ENCODE measurements at regions of chr2 and their contacts with region 1.

Region 1: DNA sequence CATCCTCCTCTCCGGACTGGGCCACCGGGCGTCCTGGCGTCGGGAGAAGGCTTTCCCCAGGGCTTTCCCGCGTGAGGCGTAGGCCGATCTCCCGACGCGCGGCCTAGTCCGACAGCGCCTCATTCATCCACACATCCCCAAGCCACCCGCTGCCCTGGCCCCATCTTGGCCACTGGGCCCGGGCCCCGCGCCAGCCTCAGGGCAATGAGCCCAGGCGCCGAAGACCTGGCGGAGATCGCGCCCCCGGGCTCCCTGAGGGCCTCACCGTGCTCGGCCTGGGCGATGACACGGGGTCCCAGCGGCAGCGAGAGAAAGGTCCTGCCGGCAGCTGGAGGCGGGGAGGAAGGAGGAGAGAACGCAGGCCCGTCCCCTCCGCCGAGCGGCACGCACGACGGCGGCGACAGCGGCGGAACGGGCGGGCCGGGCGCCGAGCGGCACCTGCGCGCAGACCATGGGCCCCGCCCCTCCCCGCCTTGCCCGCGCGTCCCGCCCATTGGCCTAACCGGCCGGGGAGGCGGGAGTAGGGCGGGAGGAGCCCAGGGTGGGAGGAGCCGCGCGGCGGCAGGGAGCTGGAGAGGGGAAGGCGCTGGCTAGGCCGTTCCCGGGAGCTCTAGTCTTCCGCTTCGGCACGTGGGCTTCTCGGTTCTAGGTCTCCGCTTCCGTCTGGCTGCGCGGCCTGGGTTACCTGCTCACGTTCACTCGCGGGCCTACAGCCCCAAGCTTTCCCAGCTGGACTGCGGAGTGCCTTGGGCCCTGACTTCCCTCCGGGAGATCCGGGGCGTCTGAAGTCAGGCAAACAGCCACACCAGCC is at the start of gene OLA1:
- DNase-seq: peak; percentile 94
- ATAC-seq: peak; percentile 97
- H3K4me3 ChIP-seq: peak within 1 kb of the TSS; percentile 47 to 91 (median 79)
- H3K4me3 Mint-ChIP-seq: peak within 1 kb of the TSS; percentile 91
- H3K27ac ChIP-seq: peak within 1 kb of the TSS; percentile 70 to 87
- H3K27ac Mint-ChIP-seq: peak within 1 kb of the TSS; percentile 85
- H3K4me1 ChIP-seq: peaks cover 12 to 17% of the 10 kb centered on the region in 2 donors
- H3K4me1 Mint-ChIP-seq: peaks cover 23% of the 10 kb centered on the region
- H3K27me3 ChIP-seq: peaks cover 0 to 4% (median 0%) of the 10 kb centered on the region in 4 experiments
- H3K27me3 Mint-ChIP-seq: peaks cover 8% of the 10 kb centered on the region
- CTCF ChIP-seq: no peak
- total RNA-seq, gene OLA1: 44.3 and 47.7 TPM in 2 replicates

Region 2: GRCh38 chr2:173354601-173355131 is 893.7 kb before region 1 on chr2 and contains the start of gene CDCA7:
- CTCF ChIA-PET with region 1: no interaction called
- POLR2A ChIA-PET with region 1: no interaction called
- intact Hi-C with region 1: loop called (anchors 1 kb)
- DNase-seq: peak; percentile 69
- ATAC-seq: peak; percentile 70
- H3K4me3 ChIP-seq: peak within 1 kb of the TSS; percentile 48 to 68 (median 64)
- H3K4me3 Mint-ChIP-seq: peak within 1 kb of the TSS; percentile 88
- H3K27ac ChIP-seq: no peak within 1 kb of the TSS
- H3K27ac Mint-ChIP-seq: peak within 1 kb of the TSS; percentile 64
- H3K4me1 ChIP-seq: peaks cover 14 to 20% of the 10 kb centered on the region in 2 donors
- H3K4me1 Mint-ChIP-seq: peaks cover 26% of the 10 kb centered on the region
- H3K27me3 ChIP-seq: peaks cover 0 to 40% (median 16%) of the 10 kb centered on the region in 4 experiments
- H3K27me3 Mint-ChIP-seq: peaks cover 27% of the 10 kb centered on the region
- CTCF ChIP-seq: no peak
- total RNA-seq, gene CDCA7: 2.6 and 3.2 TPM in 2 replicates

Region 3: DNA sequence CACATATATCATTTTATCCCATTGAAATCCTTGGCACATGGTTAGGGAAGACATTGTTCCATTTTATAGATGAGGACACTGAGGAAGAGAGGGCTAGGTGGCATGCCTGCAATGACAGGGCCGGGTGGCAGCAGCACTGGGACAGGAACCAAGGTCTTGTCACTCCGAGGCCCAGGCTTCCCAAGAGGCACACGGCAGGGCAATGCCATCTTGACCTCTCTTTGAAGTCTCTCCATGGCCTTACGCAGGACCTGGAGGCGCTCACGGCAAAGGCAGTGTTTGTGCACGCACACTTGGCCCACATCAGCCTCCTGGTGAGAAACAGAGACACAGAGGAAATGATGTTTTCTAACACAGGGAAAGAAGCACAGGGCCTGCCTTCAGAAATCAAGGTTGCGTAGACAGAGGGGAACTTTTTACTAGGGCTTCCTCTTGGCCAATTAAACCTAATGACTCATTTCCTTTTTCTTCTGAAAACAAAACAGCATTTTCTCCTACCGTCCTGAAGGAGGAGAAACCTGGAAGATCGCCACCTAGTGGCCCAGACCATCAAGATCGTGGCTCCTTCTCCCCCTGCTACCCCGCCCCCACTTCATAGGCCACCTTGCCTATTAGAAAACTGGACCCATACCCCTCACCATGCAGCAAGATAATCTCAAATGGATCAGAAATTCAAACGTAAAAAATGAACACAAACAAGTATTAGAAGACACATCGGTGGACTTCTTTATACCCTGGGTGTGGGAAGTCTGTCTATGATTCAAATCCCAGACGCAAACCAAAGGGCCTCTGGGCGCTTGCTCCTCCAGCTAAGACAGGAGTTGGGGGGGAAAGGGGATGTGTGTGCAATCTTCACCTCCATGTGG is 208.6 kb before region 1 on chr2:
- CTCF ChIA-PET with region 1: no interaction called
- POLR2A ChIA-PET with region 1: no interaction called
- intact Hi-C with region 1: loop called (anchors 1 kb)
- DNase-seq: peak; percentile 93
- ATAC-seq: peak; percentile 90
- H3K4me3 ChIP-seq: peak overlapping the region in 4 of 5 experiments; percentile 7 to 34 (median 19)
- H3K4me3 Mint-ChIP-seq: peak overlapping the region; percentile 72
- H3K27ac ChIP-seq: peak overlapping the region; percentile 87 to 94
- H3K27ac Mint-ChIP-seq: peak overlapping the region; percentile 96
- H3K4me1 ChIP-seq: peaks cover 11 to 23% of the 10 kb centered on the region in 2 donors
- H3K4me1 Mint-ChIP-seq: peaks cover 24% of the 10 kb centered on the region
- H3K27me3 ChIP-seq: peaks cover 0 to 5% (median 2%) of the 10 kb centered on the region in 4 experiments
- H3K27me3 Mint-ChIP-seq: no peaks in the 10 kb centered on the region
- CTCF ChIP-seq: peak; percentile 84

Region 4: DNA sequence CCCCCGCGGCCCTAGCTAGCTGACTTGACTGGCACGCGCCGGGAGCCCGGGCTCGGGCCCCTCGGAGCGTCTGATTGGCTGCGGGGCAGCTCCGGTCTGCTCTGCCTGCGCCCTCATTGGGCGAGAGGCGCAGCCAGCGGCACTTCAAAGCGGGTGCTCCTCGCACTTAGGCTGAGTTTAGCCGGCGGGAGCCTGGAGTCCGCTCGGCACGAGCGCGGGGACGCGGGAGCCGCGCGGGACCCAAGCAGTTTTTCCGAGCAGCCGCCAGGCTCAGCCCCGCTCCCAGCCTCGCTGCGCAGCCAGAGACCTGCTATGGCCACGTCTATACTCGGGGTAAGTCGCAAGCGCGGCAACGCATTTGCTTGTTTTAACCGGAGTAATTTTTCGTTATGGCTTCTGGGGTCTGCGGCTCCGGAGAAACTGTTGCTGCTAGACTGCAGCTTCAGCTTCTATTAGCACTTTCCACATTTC is 86.4 kb after region 1 on chr2 and contains the start of gene SP9:
- CTCF ChIA-PET with region 1: no interaction called
- POLR2A ChIA-PET with region 1: no interaction called
- intact Hi-C with region 1: loop called (anchors 2 kb)
- DNase-seq: no peak
- ATAC-seq: no peak
- H3K4me3 ChIP-seq: peak within 1 kb of the TSS in 3 of 5 experiments; percentile 33 to 43 (median 35)
- H3K4me3 Mint-ChIP-seq: peak within 1 kb of the TSS; percentile 71
- H3K27ac ChIP-seq: no peak within 1 kb of the TSS
- H3K27ac Mint-ChIP-seq: peak within 1 kb of the TSS; percentile 76
- H3K4me1 ChIP-seq: peaks cover 52 to 70% of the 10 kb centered on the region in 2 donors
- H3K4me1 Mint-ChIP-seq: peaks cover 26% of the 10 kb centered on the region
- H3K27me3 ChIP-seq: peaks cover 4 to 93% (median 81%) of the 10 kb centered on the region in 4 experiments
- H3K27me3 Mint-ChIP-seq: peaks cover 68% of the 10 kb centered on the region
- CTCF ChIP-seq: no peak
- total RNA-seq, gene SP9: not detected in 2 replicates

Region 5: DNA sequence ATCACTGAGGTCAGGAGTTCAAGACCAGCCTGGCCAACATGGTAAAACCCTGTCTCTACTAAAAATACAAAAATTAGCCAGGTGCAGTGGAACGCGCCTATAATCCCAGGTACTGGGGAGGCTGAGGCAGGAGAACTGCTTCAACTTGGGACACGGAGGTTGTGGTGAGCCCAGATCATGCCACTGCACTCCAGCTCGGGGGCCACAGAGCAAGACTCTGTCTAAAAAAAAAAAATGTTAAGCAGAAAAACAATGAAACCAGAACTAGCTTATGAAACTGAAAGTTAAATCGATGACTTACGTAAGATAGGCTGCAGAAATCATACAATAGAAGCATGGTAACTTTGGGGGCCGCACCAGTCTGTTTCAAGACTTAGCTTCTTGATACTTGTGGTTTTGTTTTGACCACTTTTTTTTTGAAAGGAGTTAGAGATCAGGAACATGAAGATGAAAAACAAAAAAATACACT is 244.6 kb after region 1 on chr2:
- CTCF ChIA-PET with region 1: no interaction called
- POLR2A ChIA-PET with region 1: no interaction called
- intact Hi-C with region 1: loop called (anchors 10 kb)
- DNase-seq: peak; percentile 89
- ATAC-seq: peak; percentile 95
- H3K4me3 ChIP-seq: peak overlapping the region in 3 of 5 experiments; percentile 34 to 50 (median 37)
- H3K4me3 Mint-ChIP-seq: peak overlapping the region; percentile 84
- H3K27ac ChIP-seq: peak overlapping the region; percentile 82 to 94
- H3K27ac Mint-ChIP-seq: peak overlapping the region; percentile 94
- H3K4me1 ChIP-seq: peaks cover 30 to 32% of the 10 kb centered on the region in 2 donors
- H3K4me1 Mint-ChIP-seq: peaks cover 51% of the 10 kb centered on the region
- H3K27me3 ChIP-seq: no peaks in the 10 kb centered on the region
- H3K27me3 Mint-ChIP-seq: no peaks in the 10 kb centered on the region
- CTCF ChIP-seq: no peak

Region 6: GRCh38 chr2:174681099-174682006 is 433.0 kb after region 1 on chr2:
- CTCF ChIA-PET with region 1: no interaction called
- POLR2A ChIA-PET with region 1: no interaction called
- intact Hi-C with region 1: no loop called
- DNase-seq: no peak
- ATAC-seq: no peak
- H3K4me3 ChIP-seq: peak overlapping the region; percentile 67 to 87 (median 72)
- H3K4me3 Mint-ChIP-seq: peak overlapping the region; percentile 86
- H3K27ac ChIP-seq: peak overlapping the region in 1 of 2 donors; percentile 67
- H3K27ac Mint-ChIP-seq: no peak overlapping the region
- H3K4me1 ChIP-seq: peaks cover 8 to 12% of the 10 kb centered on the region in 2 donors
- H3K4me1 Mint-ChIP-seq: peaks cover 20% of the 10 kb centered on the region
- H3K27me3 ChIP-seq: no peaks in the 10 kb centered on the region
- H3K27me3 Mint-ChIP-seq: no peaks in the 10 kb centered on the region
- CTCF ChIP-seq: no peak

Region 7: GRCh38 chr2:174827371-174828369 is 579.3 kb after region 1 on chr2:
- CTCF ChIA-PET with region 1: no interaction called
- POLR2A ChIA-PET with region 1: no interaction called
- intact Hi-C with region 1: no loop called
- DNase-seq: no peak
- ATAC-seq: no peak
- H3K4me3 ChIP-seq: no peak overlapping the region
- H3K4me3 Mint-ChIP-seq: no peak overlapping the region
- H3K27ac ChIP-seq: no peak overlapping the region
- H3K27ac Mint-ChIP-seq: no peak overlapping the region
- H3K4me1 ChIP-seq: no peaks in the 10 kb centered on the region
- H3K4me1 Mint-ChIP-seq: no peaks in the 10 kb centered on the region
- H3K27me3 ChIP-seq: no peaks in the 10 kb centered on the region
- H3K27me3 Mint-ChIP-seq: peaks cover 16% of the 10 kb centered on the region
- CTCF ChIP-seq: no peak

Region 8: GRCh38 chr2:175167792-175168563 is 919.6 kb after region 1 on chr2 and contains the start of gene ATF2:
- CTCF ChIA-PET with region 1: no interaction called
- POLR2A ChIA-PET with region 1: no interaction called
- intact Hi-C with region 1: loop called (anchors 5 kb)
- DNase-seq: peak; percentile 99
- ATAC-seq: peak; percentile 91
- H3K4me3 ChIP-seq: peak within 1 kb of the TSS; percentile 93 to 98 (median 97)
- H3K4me3 Mint-ChIP-seq: peak within 1 kb of the TSS; percentile 99
- H3K27ac ChIP-seq: peak within 1 kb of the TSS; percentile 86 to 91
- H3K27ac Mint-ChIP-seq: peak within 1 kb of the TSS; percentile 93
- H3K4me1 ChIP-seq: peaks cover 5 to 21% of the 10 kb centered on the region in 2 donors
- H3K4me1 Mint-ChIP-seq: peaks cover 33% of the 10 kb centered on the region
- H3K27me3 ChIP-seq: no peaks in the 10 kb centered on the region
- H3K27me3 Mint-ChIP-seq: no peaks in the 10 kb centered on the region
- CTCF ChIP-seq: no peak
- total RNA-seq, gene ATF2: 66.8 and 69.9 TPM in 2 replicates